ENCODE measurements at regions of chr7 and their contacts with region 1.

Region 1: GRCh38 chr7:105187302-105188169 is 173.5 kb downstream of the KMT2E start:
- DNase-seq: peak; percentile 37
- ATAC-seq: peak; percentile 83
- H3K4me3 ChIP-seq: peak overlapping the region; percentile 6; the same call in 1 of the 2 replicates
- H3K27ac ChIP-seq: peak overlapping the region; percentile 13; the same call in 1 of the 2 replicates
- H3K4me1 ChIP-seq: peaks cover 11% of the 10 kb centered on the region; the same call in 1 of the 2 replicates
- H3K27me3 ChIP-seq: no peaks in the 10 kb centered on the region
- CTCF ChIP-seq: no peak
- EP300 ChIP-seq: no peak
- POLR2A ChIP-seq: no peak
- RAD21 ChIP-seq: no peak

Region 2: GRCh38 chr7:105173586-105173985 is 13.9 kb before region 1 on chr7:
- CTCF ChIA-PET with region 1: interaction called, 3 read pairs
- POLR2A ChIA-PET with region 1: interaction called, 3 read pairs
- RAD21 ChIA-PET with region 1: interaction called, 4 read pairs
- SMC1A ChIA-PET with region 1: interaction called, 15 read pairs
- in situ Hi-C with region 1: no loop called
- intact Hi-C with region 1: no loop called
- DNase-seq: no peak
- ATAC-seq: no peak
- H3K4me3 ChIP-seq: no peak overlapping the region
- H3K27ac ChIP-seq: no peak overlapping the region
- H3K4me1 ChIP-seq: no peaks in the 10 kb centered on the region
- H3K27me3 ChIP-seq: no peaks in the 10 kb centered on the region
- CTCF ChIP-seq: no peak
- EP300 ChIP-seq: no peak
- POLR2A ChIP-seq: no peak
- RAD21 ChIP-seq: no peak

Region 3: GRCh38 chr7:105210721-105211205 is 23.2 kb after region 1 on chr7:
- CTCF ChIA-PET with region 1: interaction called, 6 read pairs
- POLR2A ChIA-PET with region 1: interaction called, 5 read pairs
- RAD21 ChIA-PET with region 1: interaction called, 3 read pairs
- SMC1A ChIA-PET with region 1: interaction called, 10 read pairs
- in situ Hi-C with region 1: no loop called
- intact Hi-C with region 1: no loop called
- DNase-seq: peak; percentile 66
- ATAC-seq: peak; percentile 93
- H3K4me3 ChIP-seq: peak overlapping the region; percentile 45; the same call in 1 of the 2 replicates
- H3K27ac ChIP-seq: peak overlapping the region; percentile 9
- H3K4me1 ChIP-seq: peaks cover 22% of the 10 kb centered on the region
- H3K27me3 ChIP-seq: no peaks in the 10 kb centered on the region
- CTCF ChIP-seq: no peak
- EP300 ChIP-seq: no peak
- POLR2A ChIP-seq: no peak
- RAD21 ChIP-seq: no peak

Region 4: DNA sequence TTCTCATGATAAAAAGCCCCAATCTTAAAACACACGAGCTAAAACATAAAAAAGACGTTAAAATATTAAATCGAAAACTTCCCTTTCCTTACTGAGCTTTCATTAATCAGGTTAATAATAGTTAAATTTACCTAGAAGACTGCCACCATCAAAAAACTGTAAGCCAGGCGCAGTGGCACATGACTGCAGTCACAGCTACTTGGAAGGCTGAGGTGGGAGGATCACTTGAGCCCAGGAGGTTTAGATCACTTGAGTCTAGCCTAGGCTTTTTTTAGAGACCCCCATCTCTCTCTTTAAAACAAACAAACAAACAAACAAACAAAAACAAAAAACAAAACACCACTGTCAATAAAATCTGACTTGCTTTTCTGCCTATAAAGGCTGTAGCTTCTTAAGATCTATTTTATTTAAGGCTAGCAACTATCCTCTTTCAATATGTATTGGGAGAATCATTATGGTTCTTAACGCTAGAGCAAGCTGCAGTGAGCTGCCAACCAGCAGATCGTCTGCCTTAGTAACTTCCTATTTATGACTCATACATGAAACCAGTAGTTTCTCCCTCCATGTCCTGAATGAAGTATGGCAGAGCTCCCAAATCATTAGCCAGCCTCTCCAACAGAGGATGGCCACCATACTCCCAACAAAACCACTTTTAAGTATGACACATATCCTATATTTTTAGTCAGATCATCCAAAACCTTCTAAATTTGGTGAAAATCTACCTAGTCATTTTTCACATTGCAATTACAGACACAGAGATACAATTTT is 37.5 kb after region 1 on chr7:
- CTCF ChIA-PET with region 1: interaction called, 3 read pairs
- POLR2A ChIA-PET with region 1: interaction called, 3 read pairs
- RAD21 ChIA-PET with region 1: interaction called, 4 read pairs
- SMC1A ChIA-PET with region 1: interaction called, 11 read pairs
- in situ Hi-C with region 1: no loop called
- intact Hi-C with region 1: no loop called
- DNase-seq: peak; percentile 42
- ATAC-seq: peak; percentile 97
- H3K4me3 ChIP-seq: peak overlapping the region; percentile 11; the same call in 1 of the 2 replicates
- H3K27ac ChIP-seq: 0 out of 2 replicates have a peak overlapping the region, but pooled peaks have one; percentile 5
- H3K4me1 ChIP-seq: peaks cover 5% of the 10 kb centered on the region
- H3K27me3 ChIP-seq: no peaks in the 10 kb centered on the region
- CTCF ChIP-seq: no peak
- EP300 ChIP-seq: no peak; a peak in 1 of 4 replicates
- POLR2A ChIP-seq: no peak
- RAD21 ChIP-seq: no peak

Measured in GM12878 (cell line).